Posterior vena cava (tissue), 2 donors: ENCODE measurements at regions of chr2 and their contacts with region 1.

Region 1: GRCh38 chr2:21175895-21176646 is 52.3 kb downstream of the TDRD15 start:
- DNase-seq: no peak

Region 2: DNA sequence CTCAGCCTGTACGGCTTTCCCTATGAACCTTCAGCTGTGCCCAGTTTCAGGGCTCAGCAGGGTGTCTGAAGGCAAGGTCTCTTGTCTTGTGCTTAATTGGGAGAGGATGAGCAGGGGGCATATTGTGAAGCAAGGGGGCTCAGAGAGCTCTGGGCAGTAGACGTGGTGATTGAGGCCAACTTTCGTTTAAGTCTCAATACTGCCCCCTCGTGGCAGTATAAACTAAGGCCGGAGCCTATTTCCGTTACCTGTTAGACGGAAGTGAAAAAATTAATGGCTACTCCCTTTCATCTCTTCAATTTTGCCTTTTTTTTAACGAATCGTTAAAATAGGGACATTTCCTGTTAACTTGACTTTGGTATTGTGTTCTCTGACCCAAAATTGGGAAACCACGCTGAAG is 141.1 kb after region 1 on chr2:
- intact Hi-C with region 1: loop called in 1 of 2 experiments (anchors 10 kb)
- DNase-seq: no peak